ENCODE measurements at regions of chr15 and their contacts with region 1.

Region 1: DNA sequence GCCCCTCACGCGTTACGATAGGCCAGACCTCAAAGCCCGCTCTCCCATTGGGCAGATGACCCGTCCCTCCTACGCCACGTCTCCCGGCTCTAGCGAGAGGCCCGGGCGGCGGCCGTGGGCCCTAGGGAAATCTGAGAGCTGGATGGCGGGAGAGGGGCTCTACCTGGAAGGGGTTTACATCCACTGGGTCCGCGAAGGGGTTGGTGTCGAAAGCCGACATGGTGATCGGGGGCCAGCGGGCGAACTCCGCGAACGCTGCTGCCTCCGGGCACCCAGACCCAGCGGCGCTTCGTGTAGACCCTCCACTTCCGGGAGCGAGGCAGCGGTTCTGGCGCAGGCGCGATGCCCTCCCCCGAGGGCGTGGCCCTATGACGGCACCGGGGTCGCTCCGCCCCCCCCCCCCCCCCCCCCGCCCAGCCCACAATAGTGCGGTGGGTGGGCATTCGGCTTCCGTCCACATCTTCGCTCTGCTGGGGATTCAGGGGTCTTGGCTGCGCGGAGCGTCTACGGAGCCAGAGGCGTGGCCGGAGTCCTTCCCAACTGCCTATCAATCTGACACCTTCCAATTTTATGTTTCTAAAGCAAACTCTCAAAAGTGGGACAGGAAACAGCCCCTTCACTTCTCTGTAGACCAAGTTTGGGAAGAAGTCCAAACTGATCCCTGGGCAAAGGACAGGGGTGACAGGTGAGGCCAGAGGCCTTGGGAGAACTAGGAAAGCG is at the start of gene SCAMP2:
- DNase-seq: peak; percentile 90
- ATAC-seq: peak; percentile 93
- H3K4me3 Mint-ChIP-seq: peak within 1 kb of the TSS; percentile 90
- H3K27ac Mint-ChIP-seq: peak within 1 kb of the TSS; percentile 94
- H3K4me1 Mint-ChIP-seq: peaks cover 50% of the 10 kb centered on the region
- H3K27me3 Mint-ChIP-seq: no peaks in the 10 kb centered on the region
- CTCF ChIP-seq: no peak
- total RNA-seq, gene SCAMP2: 112 and 129 TPM in 2 replicates

Region 2: DNA sequence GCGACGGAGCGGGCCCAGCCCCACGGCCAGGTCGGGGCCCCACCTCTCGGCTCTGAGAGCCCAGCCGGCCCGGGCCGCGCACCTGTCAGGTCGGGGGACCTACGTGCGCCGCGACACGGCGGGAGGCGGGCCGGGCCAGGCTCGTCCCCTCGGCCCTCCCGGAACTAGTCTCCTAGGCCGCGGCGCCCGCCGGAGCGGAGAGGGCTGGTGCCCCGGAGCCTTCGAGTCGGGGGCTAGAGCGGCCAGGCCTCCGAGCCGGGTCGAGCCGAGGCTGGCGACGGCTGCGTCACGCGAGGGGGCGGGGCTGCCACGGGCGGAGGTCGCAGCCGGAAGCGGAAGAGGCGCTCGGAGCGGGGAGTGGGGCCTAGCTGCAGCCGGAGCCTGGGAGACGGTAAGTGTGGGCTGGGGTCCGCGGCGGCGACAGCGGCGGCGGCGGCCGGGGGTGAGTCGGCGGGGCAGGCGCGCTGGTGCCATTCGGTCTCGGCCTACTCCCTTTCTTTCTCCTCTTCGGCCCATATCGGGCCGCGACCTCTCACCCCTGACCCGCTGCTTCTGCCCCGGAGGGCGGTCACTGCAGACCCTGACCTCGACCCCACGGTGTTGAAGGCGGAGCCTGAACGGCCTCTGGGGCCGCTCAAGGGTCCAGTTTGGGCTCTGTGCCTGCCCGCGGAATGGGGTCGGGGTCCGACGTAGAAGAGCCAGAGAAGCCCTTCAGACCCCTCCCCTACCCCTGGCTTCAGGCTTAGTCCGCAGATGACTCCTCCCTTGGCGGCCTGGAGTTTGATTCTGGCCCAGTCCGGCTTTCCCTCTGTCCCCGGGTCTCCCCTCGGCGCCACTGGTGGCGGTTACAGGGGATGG is 257.5 kb before region 1 on chr15 and contains the start of gene CLK3:
- CTCF ChIA-PET with region 1: no interaction called
- POLR2A ChIA-PET with region 1: no interaction called
- intact Hi-C with region 1: loop called (anchors 1 kb)
- DNase-seq: peak; percentile 99
- ATAC-seq: peak; percentile 83
- H3K4me3 Mint-ChIP-seq: peak within 1 kb of the TSS; percentile 89
- H3K27ac Mint-ChIP-seq: peak within 1 kb of the TSS; percentile 95
- H3K4me1 Mint-ChIP-seq: peaks cover 35% of the 10 kb centered on the region
- H3K27me3 Mint-ChIP-seq: no peaks in the 10 kb centered on the region
- CTCF ChIP-seq: no peak
- total RNA-seq, gene CLK3: 100 and 116 TPM in 2 replicates

Region 3: GRCh38 chr15:74842581-74843444 is 30.4 kb before region 1 on chr15 and contains the start of gene ULK3:
- CTCF ChIA-PET with region 1: interaction called, 8 read pairs
- POLR2A ChIA-PET with region 1: interaction called, 8 read pairs
- intact Hi-C with region 1: loop called (anchors 1 kb)
- DNase-seq: peak; percentile 97
- ATAC-seq: peak; percentile 95
- H3K4me3 Mint-ChIP-seq: peak within 1 kb of the TSS; percentile 91
- H3K27ac Mint-ChIP-seq: peak within 1 kb of the TSS; percentile 77
- H3K4me1 Mint-ChIP-seq: peaks cover 48% of the 10 kb centered on the region
- H3K27me3 Mint-ChIP-seq: no peaks in the 10 kb centered on the region
- CTCF ChIP-seq: no peak
- total RNA-seq, gene ULK3: 43.6 and 52.1 TPM in 2 replicates

Region 4: DNA sequence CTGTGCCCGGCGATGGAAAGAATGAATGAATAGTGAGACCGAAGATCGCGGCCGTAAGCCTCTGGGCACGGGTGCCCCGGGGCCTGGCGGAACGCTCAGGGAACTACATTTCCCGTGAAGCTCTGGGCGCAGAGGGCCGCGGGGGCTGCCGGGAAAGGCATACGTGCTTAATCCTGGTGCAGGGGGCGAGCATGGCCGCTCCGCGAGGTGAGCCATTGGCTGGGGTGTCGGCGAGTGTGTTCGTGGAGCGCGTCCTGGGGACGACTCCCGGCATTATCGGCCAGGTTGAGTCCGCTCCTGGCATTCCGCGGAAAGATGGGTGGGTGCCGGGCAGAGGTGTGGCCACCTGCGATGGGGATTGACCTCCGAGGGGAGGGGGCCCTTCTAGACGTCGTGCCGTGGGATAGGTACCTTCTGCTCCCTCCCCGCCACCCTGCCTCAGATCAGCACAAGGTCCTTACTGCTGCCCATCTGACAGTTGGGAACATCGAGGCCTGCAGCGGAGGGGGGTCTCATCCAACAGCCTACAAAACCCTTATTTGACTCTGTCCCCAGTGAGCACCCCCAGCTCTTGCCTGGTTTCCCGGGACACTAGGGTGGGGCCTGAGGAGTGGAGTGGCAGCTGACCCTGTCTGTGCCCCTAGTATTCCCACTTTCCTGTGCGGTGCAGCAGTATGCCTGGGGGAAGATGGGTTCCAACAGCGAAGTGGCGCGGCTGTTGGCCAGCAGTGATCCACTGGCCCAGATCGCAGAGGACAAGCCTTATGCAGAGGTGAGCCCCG is 16.9 kb after region 1 on chr15 and contains the start of gene MPI:
- CTCF ChIA-PET with region 1: interaction called, 3 read pairs
- POLR2A ChIA-PET with region 1: interaction called, 17 read pairs
- intact Hi-C with region 1: loop called (anchors 1 kb)
- DNase-seq: peak; percentile 79
- ATAC-seq: peak; percentile 99
- H3K4me3 Mint-ChIP-seq: peak within 1 kb of the TSS; percentile 96
- H3K27ac Mint-ChIP-seq: peak within 1 kb of the TSS; percentile 89
- H3K4me1 Mint-ChIP-seq: peaks cover 45% of the 10 kb centered on the region
- H3K27me3 Mint-ChIP-seq: no peaks in the 10 kb centered on the region
- CTCF ChIP-seq: no peak
- total RNA-seq, gene MPI: 33.1 and 40.2 TPM in 2 replicates

Region 5: GRCh38 chr15:75023181-75023871 is 150.1 kb after region 1 on chr15 and contains the start of gene PPCDC:
- CTCF ChIA-PET with region 1: no interaction called
- POLR2A ChIA-PET with region 1: interaction called, 11 read pairs
- intact Hi-C with region 1: no loop called
- DNase-seq: peak; percentile 82
- ATAC-seq: peak; percentile 100
- H3K4me3 Mint-ChIP-seq: peak within 1 kb of the TSS; percentile 95
- H3K27ac Mint-ChIP-seq: peak within 1 kb of the TSS; percentile 86
- H3K4me1 Mint-ChIP-seq: peaks cover 9% of the 10 kb centered on the region
- H3K27me3 Mint-ChIP-seq: peaks cover 6% of the 10 kb centered on the region
- CTCF ChIP-seq: no peak
- total RNA-seq, gene PPCDC: 13.5 and 16.6 TPM in 2 replicates

Measured in activated B cell treated with CpG ODN at 0.5 μM for 24 hours (primary cell).